Activated CD4-positive, alpha-beta T cell treated with anti-CD3 and anti-CD28 coated beads for 36 hours (primary cell): ENCODE measurements at regions of chr22 and their contacts with region 1.

Region 1: GRCh38 chr22:40346178-40347118 is at the start of gene ADSL:
- DNase-seq: peak; percentile 94
- ATAC-seq: peak; percentile 87
- H3K4me3 Mint-ChIP-seq: peak within 1 kb of the TSS; percentile 86
- H3K27ac Mint-ChIP-seq: peak within 1 kb of the TSS; percentile 92
- H3K4me1 Mint-ChIP-seq: peaks cover 45% of the 10 kb centered on the region
- H3K27me3 Mint-ChIP-seq: no peaks in the 10 kb centered on the region
- total RNA-seq, gene ADSL: 125 to 172 TPM

Region 2: GRCh38 chr22:39502109-39502788 is 844.2 kb before region 1 on chr22 and contains the start of gene MIEF1:
- CTCF ChIA-PET with region 1: no interaction called
- POLR2A ChIA-PET with region 1: no interaction called
- intact Hi-C with region 1: loop called in 1 of 2 experiments (anchors 1 kb)
- DNase-seq: peak; percentile 98
- ATAC-seq: peak; percentile 98
- H3K4me3 Mint-ChIP-seq: peak within 1 kb of the TSS; percentile 76
- H3K27ac Mint-ChIP-seq: peak within 1 kb of the TSS; percentile 94
- H3K4me1 Mint-ChIP-seq: peaks cover 35% of the 10 kb centered on the region
- H3K27me3 Mint-ChIP-seq: no peaks in the 10 kb centered on the region
- total RNA-seq, gene MIEF1: 43.2 to 44.9 TPM

Region 3: DNA sequence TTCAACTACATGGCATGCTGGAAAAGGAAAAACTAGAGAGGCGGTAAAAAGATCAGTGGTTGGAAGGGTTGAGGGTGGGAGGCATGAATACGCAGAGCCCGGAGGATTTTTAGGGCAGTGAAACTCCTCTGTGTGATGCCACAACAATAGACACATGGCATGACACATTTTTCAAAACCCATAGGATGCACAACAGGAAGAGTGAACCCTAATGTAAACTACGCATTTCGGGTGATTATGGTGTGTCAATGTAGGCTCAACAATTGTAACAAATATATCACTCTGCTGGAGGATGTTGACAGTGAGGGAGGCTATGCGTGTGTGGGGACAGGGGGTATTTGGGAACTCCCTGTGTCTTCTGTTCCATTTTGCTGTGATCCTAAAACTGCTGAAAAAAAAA is 367.4 kb before region 1 on chr22:
- CTCF ChIA-PET with region 1: no interaction called
- POLR2A ChIA-PET with region 1: interaction called, 10 read pairs
- intact Hi-C with region 1: no loop called
- DNase-seq: no peak
- ATAC-seq: peak; percentile 65
- H3K4me3 Mint-ChIP-seq: no peak overlapping the region
- H3K27ac Mint-ChIP-seq: no peak overlapping the region
- H3K4me1 Mint-ChIP-seq: peaks cover 20% of the 10 kb centered on the region
- H3K27me3 Mint-ChIP-seq: no peaks in the 10 kb centered on the region

Region 4: DNA sequence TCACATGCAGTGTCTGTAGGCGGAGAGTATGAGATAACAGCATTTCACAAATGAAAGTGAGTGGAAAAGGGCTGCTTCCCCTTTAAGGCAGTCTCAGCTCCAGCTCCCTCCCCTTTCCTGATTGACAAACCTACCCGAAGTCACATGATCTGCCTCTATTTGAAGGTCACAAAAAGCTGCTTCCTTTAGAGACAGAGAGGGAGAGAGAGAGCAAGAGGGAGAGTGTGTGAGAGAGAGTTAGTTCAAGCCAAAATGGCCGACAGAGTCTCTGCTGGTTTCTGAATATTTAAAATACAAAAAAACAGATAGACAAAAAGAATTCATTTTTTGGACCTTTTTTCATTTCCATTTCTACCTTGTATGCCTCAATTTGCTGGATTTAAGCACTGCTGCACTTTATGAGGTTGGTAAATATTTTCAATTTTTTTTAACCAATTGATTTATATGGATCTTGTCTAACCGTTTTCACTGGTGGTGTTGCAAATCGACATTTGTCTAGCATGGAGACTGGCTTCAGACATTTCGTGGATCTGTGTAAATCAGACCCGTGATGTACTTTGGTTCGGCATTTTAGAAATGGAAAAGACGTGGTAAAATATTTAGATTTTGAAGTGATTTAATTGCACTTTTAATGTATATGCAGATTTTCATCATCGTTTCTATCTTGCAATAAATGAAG is 168.6 kb before region 1 on chr22 and contains the start of gene TNRC6B:
- CTCF ChIA-PET with region 1: interaction called, 16 read pairs
- POLR2A ChIA-PET with region 1: interaction called, 10 read pairs
- intact Hi-C with region 1: loop called (anchors 1 kb)
- DNase-seq: peak; percentile 82
- ATAC-seq: peak; percentile 77
- H3K4me3 Mint-ChIP-seq: peak within 1 kb of the TSS; percentile 89
- H3K27ac Mint-ChIP-seq: peak within 1 kb of the TSS; percentile 92
- H3K4me1 Mint-ChIP-seq: peaks cover 57% of the 10 kb centered on the region
- H3K27me3 Mint-ChIP-seq: no peaks in the 10 kb centered on the region
- total RNA-seq, gene TNRC6B: 37.3 to 40.3 TPM

Region 5: GRCh38 chr22:40250608-40251007 is 95.8 kb before region 1 on chr22:
- CTCF ChIA-PET with region 1: no interaction called
- POLR2A ChIA-PET with region 1: interaction called, 3 read pairs
- intact Hi-C with region 1: loop called in 1 of 2 experiments (anchors 1 kb)
- DNase-seq: peak; percentile 66
- ATAC-seq: peak; percentile 86
- H3K4me3 Mint-ChIP-seq: no peak overlapping the region
- H3K27ac Mint-ChIP-seq: peak overlapping the region; percentile 69
- H3K4me1 Mint-ChIP-seq: peaks cover 71% of the 10 kb centered on the region
- H3K27me3 Mint-ChIP-seq: no peaks in the 10 kb centered on the region

Region 6: GRCh38 chr22:40323681-40324171 is 22.7 kb before region 1 on chr22:
- CTCF ChIA-PET with region 1: interaction called, 6 read pairs
- POLR2A ChIA-PET with region 1: interaction called, 9 read pairs
- intact Hi-C with region 1: loop called (anchors 1 kb)
- DNase-seq: peak; percentile 55
- ATAC-seq: no peak
- H3K4me3 Mint-ChIP-seq: peak overlapping the region; percentile 63
- H3K27ac Mint-ChIP-seq: peak overlapping the region; percentile 95
- H3K4me1 Mint-ChIP-seq: peaks cover 89% of the 10 kb centered on the region
- H3K27me3 Mint-ChIP-seq: no peaks in the 10 kb centered on the region

Region 7: DNA sequence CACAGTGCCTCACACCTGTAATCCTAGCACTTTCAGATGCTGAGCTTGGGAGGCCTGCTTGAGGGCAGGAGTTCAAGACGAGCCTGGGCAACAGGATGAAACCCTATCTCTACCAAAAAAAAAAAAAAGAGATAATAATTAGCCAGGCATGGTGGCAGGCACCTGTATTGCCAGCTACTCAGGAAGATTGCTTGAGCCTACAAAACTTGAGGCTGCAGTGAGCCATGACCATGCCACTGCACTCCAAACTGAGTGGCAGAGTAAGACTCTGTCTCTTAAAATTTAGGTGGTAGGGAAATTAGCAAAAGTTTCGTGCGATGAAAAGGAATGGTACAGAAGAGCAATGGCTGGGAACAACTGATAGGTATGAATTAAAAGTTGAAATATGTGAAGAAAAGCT is 492.0 kb after region 1 on chr22:
- CTCF ChIA-PET with region 1: no interaction called
- POLR2A ChIA-PET with region 1: no interaction called
- intact Hi-C with region 1: no loop called
- DNase-seq: no peak
- ATAC-seq: no peak
- H3K4me3 Mint-ChIP-seq: no peak overlapping the region
- H3K27ac Mint-ChIP-seq: no peak overlapping the region
- H3K4me1 Mint-ChIP-seq: peaks cover 19% of the 10 kb centered on the region
- H3K27me3 Mint-ChIP-seq: no peaks in the 10 kb centered on the region